ENCODE measurements at regions of chr9 and their contacts with region 1.

Region 1: DNA sequence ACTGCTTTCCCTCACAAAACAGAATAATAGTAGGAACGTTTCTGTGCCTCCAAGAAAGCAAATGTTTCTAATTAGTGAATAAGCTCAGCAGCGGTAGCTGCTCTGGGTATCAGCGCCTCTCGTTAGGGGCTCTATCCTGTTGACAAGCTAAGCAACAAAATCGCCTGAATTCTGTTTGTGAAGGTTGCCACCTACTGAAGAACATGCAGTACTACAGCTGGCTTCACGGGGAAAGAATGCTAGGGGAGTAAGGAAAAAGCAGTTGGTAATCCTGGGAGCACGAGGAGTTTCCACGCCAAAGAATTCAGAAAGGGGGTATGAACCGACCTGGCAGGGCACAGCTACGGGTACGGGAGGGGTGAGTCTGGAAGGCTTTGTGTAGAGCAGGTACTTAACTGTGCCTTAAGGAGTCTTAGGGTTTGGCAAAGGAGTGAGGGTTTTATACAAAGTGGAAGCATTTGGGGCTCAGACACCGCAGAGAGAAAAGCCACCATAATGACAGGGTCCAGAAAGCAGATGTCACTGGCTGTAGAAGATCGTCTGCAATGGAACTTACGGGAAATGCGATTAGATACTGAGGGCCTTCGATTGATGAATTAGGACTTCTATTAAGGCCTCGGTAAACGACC is 171.7 kb downstream of the TTC39B start:
- DNase-seq: peak; percentile 43
- H3K4me3 Mint-ChIP-seq: no peak overlapping the region
- H3K27ac Mint-ChIP-seq: no peak overlapping the region
- H3K4me1 Mint-ChIP-seq: peaks cover 6% of the 10 kb centered on the region
- H3K27me3 Mint-ChIP-seq: peaks cover 5% of the 10 kb centered on the region

Region 2: DNA sequence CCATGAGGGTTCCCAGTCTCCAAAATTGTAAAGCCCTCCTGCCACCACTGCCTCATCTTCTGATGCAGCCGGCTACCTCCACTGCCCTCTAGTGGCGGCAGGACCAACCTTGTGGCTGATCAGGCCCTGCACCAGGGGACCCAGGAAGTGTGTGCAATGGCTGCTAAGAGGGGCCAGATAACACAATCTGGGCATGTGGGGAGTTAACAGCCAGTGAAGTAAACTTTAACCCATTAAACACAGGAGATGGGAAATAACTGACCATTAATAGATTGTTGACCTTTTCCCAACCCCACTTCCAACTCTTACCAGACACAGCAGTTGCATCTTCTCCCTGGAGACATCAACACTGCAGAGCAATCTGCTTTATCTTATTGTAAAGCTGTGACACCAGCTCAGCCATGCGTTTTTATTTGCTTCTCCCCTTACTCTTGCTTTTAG is 288.4 kb before region 1 on chr9:
- intact Hi-C with region 1: loop called (anchors 1 kb)
- DNase-seq: peak; percentile 42
- H3K4me3 Mint-ChIP-seq: no peak overlapping the region
- H3K27ac Mint-ChIP-seq: no peak overlapping the region
- H3K4me1 Mint-ChIP-seq: no peaks in the 10 kb centered on the region
- H3K27me3 Mint-ChIP-seq: peaks cover 7% of the 10 kb centered on the region

Region 3: GRCh38 chr9:15104826-15105420 is 30.4 kb before region 1 on chr9:
- intact Hi-C with region 1: loop called (anchors 1 kb)
- DNase-seq: peak; percentile 17
- H3K4me3 Mint-ChIP-seq: no peak overlapping the region
- H3K27ac Mint-ChIP-seq: no peak overlapping the region
- H3K4me1 Mint-ChIP-seq: no peaks in the 10 kb centered on the region
- H3K27me3 Mint-ChIP-seq: peaks cover 21% of the 10 kb centered on the region

Region 4: GRCh38 chr9:15176836-15177235 is 41.6 kb after region 1 on chr9:
- intact Hi-C with region 1: no loop called
- DNase-seq: no peak
- H3K4me3 Mint-ChIP-seq: no peak overlapping the region
- H3K27ac Mint-ChIP-seq: no peak overlapping the region
- H3K4me1 Mint-ChIP-seq: peaks cover 9% of the 10 kb centered on the region
- H3K27me3 Mint-ChIP-seq: no peaks in the 10 kb centered on the region